ENCODE measurements at regions of chr14 and their contacts with region 1.

Region 1: GRCh38 chr14:100375963-100376735 is 53.0 kb downstream of the SLC25A47 start:
- DNase-seq: peak; percentile 91 to 93
- H3K4me3 ChIP-seq: peak within 1 kb of the TSS; percentile 57 to 95 (median 79)
- H3K27ac ChIP-seq: peak within 1 kb of the TSS; percentile 78 to 95
- H3K4me1 ChIP-seq: peaks cover 0 to 10% of the 10 kb centered on the region in 2 donors
- H3K27me3 ChIP-seq: no peaks in the 10 kb centered on the region
- CTCF ChIP-seq: no peak
- POLR2A ChIP-seq: peak; percentile 40

Region 2: DNA sequence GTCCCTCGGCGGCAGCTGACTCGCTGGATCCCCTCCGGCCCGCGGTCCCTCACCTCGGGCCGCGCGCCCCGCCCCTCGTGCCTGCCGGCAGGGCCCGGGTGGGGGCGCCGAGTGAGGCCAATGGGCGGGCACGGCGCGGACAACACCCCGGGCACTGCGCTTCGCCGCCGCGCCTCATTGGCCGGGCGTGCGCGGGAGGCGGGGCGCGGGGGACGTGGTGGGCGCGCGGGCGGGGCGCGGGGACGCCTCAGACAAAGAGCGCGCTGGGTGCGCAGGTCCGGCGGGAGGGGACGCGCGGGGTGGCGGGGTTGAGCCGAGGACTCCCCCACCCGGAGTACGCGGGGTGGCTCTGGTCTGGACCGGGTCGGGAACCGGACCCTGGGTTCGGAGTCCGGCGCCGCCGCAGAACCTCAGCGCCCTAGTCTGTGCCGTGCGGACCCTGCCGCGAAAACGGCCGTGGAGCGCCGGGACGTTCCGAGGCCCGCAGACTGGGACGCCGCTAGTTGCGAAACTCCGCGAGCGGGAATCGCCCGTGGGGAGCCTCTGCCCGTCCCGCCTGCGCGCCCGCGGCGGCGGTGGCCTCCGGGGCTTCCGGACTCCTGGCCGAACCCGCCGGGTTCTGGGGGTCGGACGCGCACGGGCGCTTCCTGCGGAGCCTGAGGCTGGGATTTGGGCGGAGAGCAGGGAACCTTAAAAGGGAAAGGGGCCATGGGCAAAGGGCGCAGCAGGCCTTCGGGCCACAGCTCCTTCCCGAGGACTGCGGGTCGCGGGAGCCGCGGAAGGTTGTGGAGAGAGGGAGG is 69.5 kb before region 1 on chr14 and contains the start of gene SLC25A29:
- intact Hi-C with region 1: loop called (anchors 10 kb)
- DNase-seq: peak; percentile 77 to 84
- H3K4me3 ChIP-seq: peak within 1 kb of the TSS; percentile 85 to 96 (median 89)
- H3K27ac ChIP-seq: peak within 1 kb of the TSS; percentile 78 to 90
- H3K4me1 ChIP-seq: peaks cover 0 to 23% of the 10 kb centered on the region in 2 donors
- H3K27me3 ChIP-seq: no peaks in the 10 kb centered on the region
- CTCF ChIP-seq: no peak
- POLR2A ChIP-seq: peak; percentile 42
- total RNA-seq, gene SLC25A29: 40.2 to 119 (median 110) TPM